ENCODE measurements at regions of chr6 and their contacts with region 1.

Region 1: DNA sequence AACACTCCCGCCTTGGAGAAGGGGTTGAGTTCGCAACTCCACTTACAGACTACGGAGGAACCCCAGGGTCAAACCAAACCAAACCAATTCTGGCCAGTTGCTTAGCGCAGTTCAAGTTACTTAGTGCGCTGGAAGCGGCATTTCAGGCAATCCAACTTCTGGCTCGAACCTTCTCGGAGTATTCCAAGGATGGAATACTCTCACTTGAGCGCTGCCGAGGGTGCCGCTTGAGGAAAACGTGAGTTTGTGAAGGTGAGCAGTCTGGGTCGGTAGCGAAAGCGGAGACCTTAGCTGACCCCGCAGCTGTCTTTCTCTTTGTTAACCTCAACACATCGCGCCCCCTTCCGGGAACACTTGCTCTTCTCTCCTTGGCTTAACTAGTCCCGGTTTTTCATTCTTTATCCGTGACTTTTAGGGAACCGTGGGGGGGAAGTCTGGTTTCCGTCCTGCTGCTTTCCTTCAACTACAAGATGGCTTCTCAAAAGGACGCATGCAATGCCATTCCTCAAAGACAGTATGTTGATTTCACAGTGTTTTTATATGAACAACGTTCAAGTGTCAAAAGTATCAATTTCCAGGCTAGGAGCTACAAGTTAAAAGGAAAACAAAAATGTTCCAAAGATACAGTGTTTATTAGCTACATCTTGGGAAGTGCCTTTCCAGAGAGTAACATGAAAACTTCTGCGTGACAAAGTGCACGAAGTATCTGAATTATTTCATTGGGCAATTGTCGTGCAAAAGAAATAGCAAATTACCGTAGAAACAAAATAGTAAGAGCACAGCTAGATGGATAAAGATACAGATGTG is 742 bp upstream of the PNISR start:
- DNase-seq: peak in 6 of 10 donors; percentile 25 to 78 (median 45)
- ATAC-seq: peak; percentile 42 to 46
- H3K4me3 Mint-ChIP-seq: peak overlapping the region; percentile 94 to 100 (median 98)
- H3K27ac Mint-ChIP-seq: peak overlapping the region; percentile 95 to 100 (median 99)
- H3K4me1 Mint-ChIP-seq: peaks cover 25 to 66% (median 62%) of the 10 kb centered on the region in 4 donors
- H3K27me3 Mint-ChIP-seq: peaks cover 0 to 1% (median 0%) of the 10 kb centered on the region in 5 donors

Region 2: GRCh38 chr6:99393698-99394531 is 31.9 kb before region 1 on chr6 and contains the start of gene COQ3:
- POLR2A ChIA-PET with region 1: interaction called, 42 read pairs
- DNase-seq: peak; percentile 35 to 80 (median 62)
- ATAC-seq: peak; percentile 69 to 73
- H3K4me3 Mint-ChIP-seq: peak within 1 kb of the TSS; percentile 86 to 98 (median 94)
- H3K27ac Mint-ChIP-seq: peak within 1 kb of the TSS; percentile 81 to 96 (median 92)
- H3K4me1 Mint-ChIP-seq: peaks cover 2 to 27% (median 17%) of the 10 kb centered on the region in 4 donors
- H3K27me3 Mint-ChIP-seq: no peaks in the 10 kb centered on the region
- polyA plus RNA-seq, gene COQ3: 6.3 to 12.0 (median 7.7) TPM

Region 3: DNA sequence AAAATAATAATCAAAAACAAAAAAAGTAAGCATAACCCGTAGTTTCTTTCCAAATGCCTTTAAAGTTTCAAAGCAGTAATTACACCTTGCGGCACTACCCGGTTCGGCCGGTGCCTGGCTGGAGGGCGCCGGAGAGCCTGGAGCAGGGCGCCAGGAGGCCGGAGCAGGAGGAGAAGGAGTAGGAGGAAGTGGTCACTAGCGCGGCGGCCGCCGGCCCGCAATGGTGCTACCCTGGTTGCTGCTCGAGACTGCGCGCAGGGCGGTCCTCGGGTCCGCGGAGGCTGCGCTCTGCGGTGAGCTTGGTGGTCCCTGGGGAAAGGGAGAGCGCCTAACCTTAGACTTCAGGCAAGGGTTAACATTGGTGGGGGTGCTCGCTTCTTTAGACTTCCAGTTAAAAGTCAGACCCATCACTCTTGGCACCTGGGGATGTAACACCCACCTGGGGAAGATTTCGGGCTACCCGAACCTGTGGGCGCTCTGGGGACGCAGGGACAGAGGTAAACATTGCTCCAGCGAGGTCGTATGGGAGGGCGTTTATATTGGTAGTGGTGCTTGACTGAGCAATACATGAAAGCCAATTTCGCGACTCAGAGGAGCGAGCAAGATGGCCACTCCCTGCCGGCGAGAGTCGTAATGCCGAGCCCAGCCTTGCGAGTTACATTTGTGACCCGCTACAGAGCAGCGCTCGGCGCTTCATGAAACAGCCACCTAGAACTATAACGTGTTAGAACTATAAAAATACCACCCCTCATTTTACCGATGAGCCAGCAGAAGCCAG is 95.2 kb after region 1 on chr6:
- POLR2A ChIA-PET with region 1: interaction called, 14 read pairs
- DNase-seq: peak; percentile 24 to 80 (median 64)
- ATAC-seq: peak; percentile 91 to 94
- H3K4me3 Mint-ChIP-seq: peak overlapping the region; percentile 91 to 99 (median 97)
- H3K27ac Mint-ChIP-seq: peak overlapping the region; percentile 75 to 98 (median 93)
- H3K4me1 Mint-ChIP-seq: peaks cover 9 to 27% (median 21%) of the 10 kb centered on the region in 4 donors
- H3K27me3 Mint-ChIP-seq: peaks cover 0 to 2% (median 0%) of the 10 kb centered on the region in 5 donors

Region 4: GRCh38 chr6:99568103-99568933 is 142.5 kb after region 1 on chr6 and contains the start of gene CCNC:
- POLR2A ChIA-PET with region 1: interaction called, 24 read pairs
- DNase-seq: peak; percentile 71 to 92 (median 89)
- ATAC-seq: peak; percentile 92 to 94
- H3K4me3 Mint-ChIP-seq: peak within 1 kb of the TSS; percentile 94 to 100 (median 99)
- H3K27ac Mint-ChIP-seq: peak within 1 kb of the TSS; percentile 93 to 99 (median 96)
- H3K4me1 Mint-ChIP-seq: peaks cover 13 to 45% (median 31%) of the 10 kb centered on the region in 4 donors
- H3K27me3 Mint-ChIP-seq: no peaks in the 10 kb centered on the region
- polyA plus RNA-seq, gene CCNC: 37.8 to 44.3 (median 39.3) TPM

Measured in naive thymus-derived CD8-positive, alpha-beta T cell (primary cell).